Colonic mucosa (tissue), 4 donors: ENCODE measurements at regions of chr4 and their contacts with region 1.

Region 1: GRCh38 chr4:10013722-10014121 is 7.6 kb downstream of the SLC2A9 start:
- DNase-seq: peak; percentile 78
- H3K4me3 ChIP-seq: no peak overlapping the region
- H3K27ac ChIP-seq: no peak overlapping the region
- H3K4me1 ChIP-seq: no peaks in the 10 kb centered on the region
- H3K27me3 ChIP-seq: no peaks in the 10 kb centered on the region
- CTCF ChIP-seq: peak; percentile 54

Region 2: GRCh38 chr4:9691238-9692065 is 322.3 kb before region 1 on chr4:
- intact Hi-C with region 1: loop called (anchors 5 kb)
- DNase-seq: peak; percentile 97
- H3K4me3 ChIP-seq: peak overlapping the region; percentile 47
- H3K27ac ChIP-seq: peak overlapping the region; percentile 81
- H3K4me1 ChIP-seq: no peaks in the 10 kb centered on the region
- H3K27me3 ChIP-seq: no peaks in the 10 kb centered on the region
- CTCF ChIP-seq: no peak

Region 3: DNA sequence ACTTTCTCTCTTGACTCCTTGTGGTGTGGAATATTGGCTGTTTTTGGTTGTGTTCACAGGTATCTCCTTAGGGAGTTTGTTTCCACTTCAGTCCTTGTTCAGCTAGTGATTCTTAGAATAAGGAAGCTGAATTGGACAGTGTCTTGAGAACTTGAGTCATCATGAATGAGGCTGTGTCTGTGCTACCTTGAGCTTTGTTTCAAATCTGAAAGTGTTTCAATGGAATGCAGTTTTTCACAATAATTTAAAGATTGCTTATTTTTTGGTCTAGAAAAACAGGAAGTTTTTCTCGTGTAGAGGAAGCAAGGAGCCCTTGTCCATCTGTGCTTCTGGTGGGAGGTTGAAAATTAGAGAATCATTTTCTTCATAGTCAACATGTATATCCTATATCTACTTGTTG is 367.0 kb after region 1 on chr4:
- intact Hi-C with region 1: no loop called
- DNase-seq: no peak
- H3K4me3 ChIP-seq: no peak overlapping the region
- H3K27ac ChIP-seq: no peak overlapping the region
- H3K4me1 ChIP-seq: no peaks in the 10 kb centered on the region
- H3K27me3 ChIP-seq: no peaks in the 10 kb centered on the region
- CTCF ChIP-seq: no peak